ENCODE measurements at regions of chr12 and their contacts with region 1.

Region 1: DNA sequence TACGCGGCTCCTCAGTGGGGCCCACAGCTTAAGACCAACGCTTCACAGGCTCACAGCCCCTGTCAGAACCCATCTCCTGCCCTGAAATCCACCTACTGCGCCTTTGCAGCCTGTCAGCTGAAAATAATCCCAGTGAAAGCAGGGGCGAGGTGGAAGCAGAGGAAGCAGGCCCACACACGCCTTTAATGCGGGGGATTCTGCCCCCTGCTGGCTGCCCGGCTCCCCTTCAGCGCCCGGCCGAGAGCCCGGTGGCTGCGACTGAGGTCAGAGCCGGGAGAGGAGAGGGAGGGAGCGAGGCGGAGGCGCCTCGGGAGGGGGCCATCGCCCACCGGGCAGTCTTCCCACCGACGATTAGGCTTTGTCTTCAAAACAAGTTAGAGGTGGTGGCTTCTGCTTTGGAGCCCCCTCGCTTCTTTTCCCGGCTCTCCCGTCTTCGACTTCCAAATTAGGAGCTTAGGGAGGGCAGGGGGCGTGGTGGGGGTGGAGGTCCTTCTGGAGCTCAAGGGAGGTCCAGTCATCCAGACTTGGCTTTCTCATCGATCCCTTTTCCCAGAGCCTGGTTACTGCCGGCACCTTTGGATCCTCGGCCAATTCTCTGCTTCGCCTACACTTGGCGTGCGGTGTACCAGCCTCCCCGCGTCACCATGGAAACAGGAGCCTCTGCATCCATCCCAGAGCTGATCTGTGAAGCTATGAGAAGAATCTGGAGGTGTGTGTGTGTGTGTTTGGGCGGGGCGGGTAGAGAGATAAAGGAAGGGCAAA is 25.2 kb upstream of the RND1 start:
- DNase-seq: peak; percentile 78 to 91 (median 88)
- H3K4me3 ChIP-seq: peak overlapping the region; percentile 34 to 74 (median 55)
- H3K27ac ChIP-seq: peak overlapping the region in 54 of 59 donors; percentile 32 to 93 (median 74)
- H3K27me3 ChIP-seq: no peaks in the 10 kb centered on the region
- CTCF ChIP-seq: peak; percentile 76 to 98 (median 94)

Region 2: GRCh38 chr12:48861111-48861510 is 29.7 kb before region 1 on chr12:
- intact Hi-C with region 1: loop called in 1 of 2 experiments (anchors 2 kb)
- DNase-seq: no peak
- H3K4me3 ChIP-seq: peak overlapping the region in 47 of 59 donors; percentile 3 to 94 (median 83)
- H3K27ac ChIP-seq: peak overlapping the region in 42 of 59 donors; percentile 1 to 88 (median 74)
- H3K27me3 ChIP-seq: no peaks in the 10 kb centered on the region
- CTCF ChIP-seq: no peak